Endothelial cell of umbilical vein (primary cell): ENCODE measurements at regions of chr3 and their contacts with region 1.

Region 1: GRCh38 chr3:172201136-172201869 is 161.9 kb downstream of the FNDC3B start:
- DNase-seq: peak; percentile 90
- H3K4me3 ChIP-seq: no peak overlapping the region
- H3K27ac ChIP-seq: peak overlapping the region; percentile 64
- H3K4me1 ChIP-seq: peaks cover 22% of the 10 kb centered on the region
- H3K27me3 ChIP-seq: no peaks in the 10 kb centered on the region
- CTCF ChIP-seq: no peak
- POLR2A ChIP-seq: no peak

Region 2: GRCh38 chr3:172153335-172153861 is 47.9 kb before region 1 on chr3:
- CTCF ChIA-PET with region 1: interaction called, 4 read pairs
- POLR2A ChIA-PET with region 1: no interaction called
- dilution Hi-C with region 1: no loop called
- intact Hi-C with region 1: loop called (anchors 2 kb)
- DNase-seq: peak; percentile 98
- H3K4me3 ChIP-seq: no peak overlapping the region
- H3K27ac ChIP-seq: peak overlapping the region; percentile 95
- H3K4me1 ChIP-seq: peaks cover 86% of the 10 kb centered on the region
- H3K27me3 ChIP-seq: no peaks in the 10 kb centered on the region
- CTCF ChIP-seq: no peak
- POLR2A ChIP-seq: peak; percentile 72

Region 3: GRCh38 chr3:172181932-172182586 is 19.2 kb before region 1 on chr3:
- CTCF ChIA-PET with region 1: interaction called, 6 read pairs
- POLR2A ChIA-PET with region 1: no interaction called
- dilution Hi-C with region 1: no loop called
- intact Hi-C with region 1: loop called (anchors 1 kb)
- DNase-seq: peak; percentile 76
- H3K4me3 ChIP-seq: no peak overlapping the region
- H3K27ac ChIP-seq: peak overlapping the region; percentile 62
- H3K4me1 ChIP-seq: peaks cover 38% of the 10 kb centered on the region
- H3K27me3 ChIP-seq: no peaks in the 10 kb centered on the region
- CTCF ChIP-seq: no peak
- POLR2A ChIP-seq: no peak

Region 4: DNA sequence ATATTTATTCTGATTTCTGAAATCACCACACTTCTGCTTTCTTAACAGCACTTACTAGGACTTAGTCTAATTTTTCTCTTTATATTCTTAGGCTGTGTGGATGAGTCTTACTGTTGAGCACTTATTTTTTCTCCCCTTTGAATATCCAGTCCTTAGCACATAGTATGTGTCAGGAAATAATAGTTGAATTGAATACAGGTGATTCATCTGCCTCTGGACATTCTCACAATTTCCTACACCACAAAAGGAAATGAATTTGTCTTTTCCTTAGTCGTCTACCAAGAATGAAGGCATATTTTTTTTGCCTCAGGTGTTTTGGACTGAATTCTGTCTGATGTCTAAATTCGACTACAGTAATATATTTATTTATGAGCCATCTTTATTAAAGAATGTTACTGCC is 42.7 kb after region 1 on chr3:
- CTCF ChIA-PET with region 1: no interaction called
- POLR2A ChIA-PET with region 1: interaction called, 8 read pairs
- dilution Hi-C with region 1: no loop called
- intact Hi-C with region 1: loop called (anchors 5 kb)
- DNase-seq: peak; percentile 65
- H3K4me3 ChIP-seq: no peak overlapping the region
- H3K27ac ChIP-seq: peak overlapping the region; percentile 24
- H3K4me1 ChIP-seq: peaks cover 42% of the 10 kb centered on the region
- H3K27me3 ChIP-seq: no peaks in the 10 kb centered on the region
- CTCF ChIP-seq: no peak
- POLR2A ChIP-seq: no peak